Activated CD8-positive, alpha-beta memory T cell treated with anti-CD3 and anti-CD28 coated beads, Interleukin-2, amount 10 ng/mL, durations not matched to agents 7 days and 5 days (primary cell): ENCODE measurements at regions of chr1 and their contacts with region 1.

Region 1: DNA sequence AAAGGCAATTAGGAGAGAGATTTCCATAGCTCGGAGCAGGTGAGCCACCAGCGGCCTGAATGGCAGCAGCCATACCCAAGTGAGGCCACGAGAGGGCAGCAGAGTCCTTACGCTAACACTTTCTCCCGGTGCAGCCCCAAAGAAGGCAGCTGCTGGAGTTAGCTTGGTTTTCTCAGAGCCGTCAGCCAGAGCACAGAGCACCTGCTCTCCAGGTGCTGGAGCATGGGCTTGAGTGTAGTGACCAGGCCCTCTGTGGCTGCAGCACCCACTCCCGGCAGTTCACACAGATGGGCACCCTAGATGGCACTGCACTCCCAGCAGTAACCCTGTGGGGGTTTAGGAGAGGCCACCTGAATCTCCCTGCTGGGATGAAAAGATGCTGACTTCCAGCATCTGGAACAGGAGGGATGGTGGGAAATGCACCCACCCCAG is 45.8 kb downstream of the TMCC2 start:
- DNase-seq: peak; percentile 88
- ATAC-seq: peak; percentile 88
- H3K4me3 Mint-ChIP-seq: no peak overlapping the region
- H3K27ac Mint-ChIP-seq: peak overlapping the region; percentile 40
- H3K4me1 Mint-ChIP-seq: peaks cover 10% of the 10 kb centered on the region
- H3K27me3 Mint-ChIP-seq: peaks cover 8% of the 10 kb centered on the region

Region 2: DNA sequence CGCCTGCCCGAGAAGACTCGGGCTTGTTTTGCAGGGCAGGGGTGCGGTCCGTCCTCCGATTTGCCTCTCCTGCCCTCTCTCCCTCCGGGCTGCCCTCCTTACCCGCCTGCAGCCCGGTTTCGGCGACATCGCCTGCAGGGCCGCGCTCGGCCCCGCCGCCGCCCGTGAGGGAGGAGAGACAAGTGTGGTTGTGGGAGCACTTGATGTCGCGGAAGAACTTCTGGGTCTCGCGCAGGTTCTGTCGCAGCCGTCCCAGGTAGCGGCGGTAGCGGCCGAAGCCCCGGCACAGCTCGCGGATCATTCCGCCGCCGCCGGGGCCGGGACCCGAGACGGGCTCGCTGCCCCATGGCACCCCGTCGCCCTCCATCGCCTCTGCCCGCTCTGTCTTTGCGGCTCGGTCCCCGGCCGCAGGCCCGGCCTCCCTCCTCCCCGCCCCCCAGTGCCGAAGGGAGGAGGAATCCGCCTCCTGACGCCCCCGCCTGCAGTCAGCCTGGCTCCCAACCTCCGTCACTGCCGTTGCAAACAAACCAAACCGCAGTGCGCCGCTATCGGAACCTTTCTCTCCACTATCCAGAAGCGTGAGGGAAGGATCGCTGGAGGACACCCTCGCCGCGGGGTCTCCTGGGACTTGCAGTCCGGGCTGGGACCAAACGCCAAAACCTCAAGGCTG is 62.3 kb before region 1 on chr1 and contains the start of gene DSTYK:
- CTCF ChIA-PET with region 1: no interaction called
- DNase-seq: peak; percentile 95
- ATAC-seq: peak; percentile 90
- H3K4me3 Mint-ChIP-seq: peak within 1 kb of the TSS; percentile 89
- H3K27ac Mint-ChIP-seq: peak within 1 kb of the TSS; percentile 88
- H3K4me1 Mint-ChIP-seq: peaks cover 50% of the 10 kb centered on the region
- H3K27me3 Mint-ChIP-seq: no peaks in the 10 kb centered on the region
- total RNA-seq, gene DSTYK: 8.7 to 11.6 TPM

Region 3: DNA sequence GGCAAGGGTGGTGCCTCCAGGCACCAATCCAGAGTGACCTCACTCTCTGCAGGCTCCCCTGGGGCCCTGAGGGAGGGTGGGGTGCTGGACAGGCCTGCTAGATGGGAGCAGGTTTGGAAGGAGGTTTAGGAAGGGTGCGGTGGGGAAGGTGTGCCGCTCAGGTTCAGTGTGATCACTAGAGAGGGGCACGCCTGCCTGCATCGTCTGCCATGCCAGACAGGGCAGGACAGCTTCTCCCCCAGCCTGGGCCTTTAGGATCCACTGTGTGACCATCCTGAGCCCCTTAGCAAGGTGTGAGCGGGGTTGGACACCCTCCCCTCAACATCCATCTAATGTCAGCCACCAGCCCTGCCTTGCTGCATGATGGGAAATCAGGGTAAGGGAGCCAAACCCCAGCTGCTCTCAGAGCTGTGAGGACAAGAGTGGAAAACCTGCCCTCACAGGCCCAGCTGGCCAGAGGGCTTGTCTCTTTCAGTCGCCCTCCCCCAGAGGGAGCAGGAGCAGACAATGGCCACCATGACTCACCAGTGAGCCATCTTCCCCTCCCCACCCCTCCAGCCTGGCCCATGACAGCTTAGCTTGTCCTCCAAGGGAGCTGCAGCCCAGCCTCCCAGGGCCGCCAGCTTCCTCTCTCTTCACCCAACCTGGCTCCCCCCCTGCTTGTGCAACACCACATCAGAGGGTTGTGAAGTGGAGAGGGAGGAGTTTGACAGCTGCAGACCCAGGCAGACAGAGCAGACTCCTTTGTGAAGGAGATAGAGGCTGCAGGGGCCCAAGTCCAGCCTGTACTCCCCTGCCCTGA is 11.0 kb after region 1 on chr1:
- CTCF ChIA-PET with region 1: interaction called, 123 read pairs
- DNase-seq: peak; percentile 96
- ATAC-seq: peak; percentile 63
- H3K4me3 Mint-ChIP-seq: peak overlapping the region; percentile 65
- H3K27ac Mint-ChIP-seq: peak overlapping the region; percentile 87
- H3K4me1 Mint-ChIP-seq: peaks cover 72% of the 10 kb centered on the region
- H3K27me3 Mint-ChIP-seq: peaks cover 21% of the 10 kb centered on the region

Region 4: GRCh38 chr1:205321164-205321958 is 47.8 kb after region 1 on chr1 and contains the start of gene NUAK2:
- CTCF ChIA-PET with region 1: interaction called, 1,096 read pairs
- DNase-seq: peak; percentile 83
- ATAC-seq: peak; percentile 91
- H3K4me3 Mint-ChIP-seq: peak within 1 kb of the TSS; percentile 88
- H3K27ac Mint-ChIP-seq: peak within 1 kb of the TSS; percentile 68
- H3K4me1 Mint-ChIP-seq: peaks cover 48% of the 10 kb centered on the region
- H3K27me3 Mint-ChIP-seq: peaks cover 19% of the 10 kb centered on the region
- total RNA-seq, gene NUAK2: 1.9 to 6.0 TPM

Region 5: DNA sequence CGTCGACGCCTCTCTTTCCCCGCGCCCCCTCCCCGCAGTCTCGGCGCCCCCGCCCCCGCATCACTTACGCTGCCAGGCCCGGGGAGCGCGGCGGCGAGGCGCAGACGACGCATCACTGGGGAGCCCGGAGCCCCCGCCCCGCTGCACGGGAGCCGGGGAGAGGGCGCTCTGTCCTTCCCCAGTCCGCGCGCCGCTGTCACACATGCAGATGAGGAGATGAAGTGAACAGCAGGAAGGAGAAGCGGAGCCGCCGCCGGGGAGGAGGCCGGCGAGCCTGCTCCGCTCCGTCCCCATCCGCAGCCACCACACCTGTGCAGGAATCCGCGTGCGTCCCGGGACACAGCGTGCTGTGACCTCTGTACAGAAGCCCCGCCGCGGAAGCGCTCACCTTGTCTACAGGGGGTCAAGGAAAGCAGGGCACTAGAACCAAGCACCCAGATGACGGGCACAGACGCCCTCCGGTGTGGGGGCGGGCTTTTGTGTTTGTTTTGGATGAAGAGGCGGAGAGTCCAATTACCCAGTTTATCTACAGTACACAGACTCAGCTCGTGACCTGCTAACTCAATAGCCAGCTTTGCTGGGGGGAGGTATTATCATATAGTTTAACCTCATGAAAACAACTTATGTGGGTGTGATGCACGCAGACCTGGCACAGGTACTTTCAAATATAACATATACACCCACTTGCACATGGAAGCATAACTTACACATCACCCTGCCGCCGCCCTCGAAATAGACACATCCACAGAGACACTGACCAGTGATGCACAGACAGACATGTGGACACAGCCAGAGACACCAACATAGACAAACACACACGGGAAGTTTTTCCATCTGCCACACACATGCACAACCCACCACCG is 70.7 kb after region 1 on chr1:
- CTCF ChIA-PET with region 1: interaction called, 11 read pairs
- DNase-seq: no peak
- ATAC-seq: peak; percentile 40
- H3K4me3 Mint-ChIP-seq: no peak overlapping the region
- H3K27ac Mint-ChIP-seq: no peak overlapping the region
- H3K4me1 Mint-ChIP-seq: peaks cover 19% of the 10 kb centered on the region
- H3K27me3 Mint-ChIP-seq: peaks cover 74% of the 10 kb centered on the region